ENCODE measurements at regions of chr12 and their contacts with region 1.

Region 1: DNA sequence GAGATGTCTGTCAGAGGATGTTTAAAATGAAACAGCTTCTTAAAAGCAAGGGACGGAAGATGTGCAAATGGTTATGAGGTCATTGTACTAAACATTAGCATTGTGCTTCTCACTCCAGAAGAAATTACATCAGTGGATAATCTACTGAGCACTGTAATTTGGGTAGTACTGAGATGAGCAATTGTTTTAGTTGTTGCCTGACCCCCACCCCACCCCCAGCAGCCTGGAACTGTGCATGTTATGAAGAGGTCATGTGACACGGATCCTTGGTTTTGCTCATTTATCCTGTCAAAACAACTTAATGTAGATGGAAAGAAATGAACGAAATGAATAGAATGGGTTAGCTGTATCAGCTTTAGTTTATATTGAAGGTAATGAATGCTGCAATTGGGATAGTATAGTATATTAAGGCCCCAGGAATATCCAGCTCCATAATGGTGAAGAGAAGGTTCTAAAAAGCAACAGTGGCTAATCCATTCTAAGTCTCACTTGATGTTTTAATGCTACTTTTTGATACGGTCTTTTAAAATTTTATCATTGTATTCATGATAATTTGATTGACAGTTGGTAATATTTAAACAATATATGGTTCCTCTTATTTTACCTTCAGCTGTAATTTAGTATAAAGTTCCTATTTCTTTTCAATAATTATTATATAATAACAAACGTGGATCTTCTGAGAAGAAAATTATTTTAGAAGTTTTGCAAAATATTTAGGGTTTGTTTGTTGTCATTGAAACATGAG is 58.5 kb downstream of the WNK1 start:
- DNase-seq: no peak
- ATAC-seq: no peak
- H3K4me3 ChIP-seq: no peak overlapping the region
- H3K27ac ChIP-seq: no peak overlapping the region
- H3K4me1 ChIP-seq: peaks cover 17 to 61% of the 10 kb centered on the region in 2 donors
- H3K27me3 ChIP-seq: no peaks in the 10 kb centered on the region
- CTCF ChIP-seq: no peak

Region 2: DNA sequence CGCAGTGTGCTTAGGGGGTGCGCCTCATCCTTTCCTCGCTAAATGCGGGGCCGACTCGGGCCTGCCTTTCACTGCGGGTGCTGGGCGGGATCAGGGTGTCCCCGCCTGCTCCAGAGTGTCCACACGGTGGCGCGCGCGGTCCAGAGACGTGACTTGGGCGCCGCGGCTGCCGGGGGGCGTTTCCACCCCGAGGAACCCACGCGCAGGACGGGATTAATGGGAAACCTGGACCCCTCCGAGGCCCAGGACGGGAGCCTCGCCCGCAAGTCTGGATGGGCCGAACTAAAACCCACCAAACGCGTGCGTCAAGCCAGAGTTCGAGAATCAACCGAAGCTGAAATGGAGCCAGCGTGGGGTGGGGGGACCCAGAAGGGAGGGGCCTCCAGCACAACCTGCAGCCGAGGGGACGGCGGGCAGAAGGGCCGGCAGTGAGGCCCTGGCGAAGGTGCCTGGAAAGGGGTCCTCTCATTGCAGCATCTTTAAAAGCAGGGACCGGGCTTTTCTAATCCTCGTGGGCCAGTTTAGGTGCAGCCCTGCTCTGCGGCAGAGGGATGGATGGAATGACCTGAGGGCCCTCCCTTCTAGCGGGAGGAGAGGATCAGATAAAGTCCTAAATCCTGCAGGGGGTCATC is 240.9 kb before region 1 on chr12:
- intact Hi-C with region 1: loop called in 1 of 2 experiments (anchors 5 kb)
- DNase-seq: peak; percentile 79 to 97 (median 87)
- ATAC-seq: peak; percentile 86
- H3K4me3 ChIP-seq: peak overlapping the region; percentile 45 to 55
- H3K27ac ChIP-seq: peak overlapping the region; percentile 81 to 87
- H3K4me1 ChIP-seq: peaks cover 7 to 31% of the 10 kb centered on the region in 2 donors
- H3K27me3 ChIP-seq: no peaks in the 10 kb centered on the region
- CTCF ChIP-seq: peak; percentile 86 to 95

Region 3: DNA sequence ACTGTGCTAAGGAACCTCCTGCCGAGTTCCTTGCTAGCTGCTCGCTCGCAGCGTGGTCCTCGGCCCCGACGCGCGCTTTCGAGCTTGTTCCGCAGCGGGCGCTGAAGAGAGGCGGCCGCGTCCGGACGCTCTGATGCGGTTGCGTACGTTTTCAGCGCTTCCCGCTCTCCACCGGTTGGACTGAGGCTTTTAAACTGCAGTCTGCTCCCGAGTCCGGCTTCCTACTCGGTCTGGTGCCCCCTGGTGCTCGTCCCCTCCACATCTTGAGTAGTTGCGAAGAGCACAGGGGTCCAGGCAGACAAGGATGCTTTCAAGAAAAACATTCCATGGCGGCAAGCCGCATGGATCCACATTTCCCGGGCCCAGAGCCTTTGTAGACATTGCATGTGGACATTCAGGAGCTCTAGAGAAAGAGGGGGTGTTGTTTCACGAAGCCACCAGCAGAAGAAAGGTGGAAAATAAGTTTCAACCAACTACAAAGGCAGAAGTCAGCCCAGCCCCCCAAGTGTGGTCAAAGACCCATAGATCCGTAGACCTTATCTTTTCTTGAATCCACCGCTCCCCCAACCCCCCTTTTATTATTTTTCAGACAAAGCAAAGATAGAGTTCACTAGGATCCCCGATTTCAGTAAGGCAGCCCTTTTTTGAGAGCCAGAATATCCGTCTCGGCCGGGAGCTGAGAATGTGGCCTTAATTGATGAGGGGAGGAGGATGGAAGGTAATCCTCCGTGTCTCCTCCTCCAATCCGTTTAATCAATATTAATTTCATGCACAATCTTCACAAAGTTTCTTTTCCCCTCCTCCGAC is 59.4 kb before region 1 on chr12:
- intact Hi-C with region 1: loop called in 1 of 2 experiments (anchors 10 kb)
- DNase-seq: peak; percentile 92 to 97 (median 94)
- ATAC-seq: peak; percentile 61
- H3K4me3 ChIP-seq: peak overlapping the region; percentile 20 to 92
- H3K27ac ChIP-seq: peak overlapping the region; percentile 81 to 98
- H3K4me1 ChIP-seq: peaks cover 3 to 34% of the 10 kb centered on the region in 2 donors
- H3K27me3 ChIP-seq: no peaks in the 10 kb centered on the region
- CTCF ChIP-seq: peak; percentile 49 to 81